Gastrocnemius medialis (tissue), 4 donors: ENCODE measurements at regions of chr15 and their contacts with region 1.

Region 1: GRCh38 chr15:68210821-68211655 is 5.9 kb upstream of the CALML4 start:
- DNase-seq: peak in 1 of 2 donors; percentile 48
- ATAC-seq: peak; percentile 35 to 70
- H3K4me3 ChIP-seq: peak overlapping the region in 1 of 4 donors; percentile 6
- H3K27ac ChIP-seq: no peak overlapping the region
- H3K4me1 ChIP-seq: peaks cover 4 to 5% of the 10 kb centered on the region in 2 donors
- H3K27me3 ChIP-seq: no peaks in the 10 kb centered on the region
- CTCF ChIP-seq: peak; percentile 75 to 94 (median 86)
- POLR2A ChIP-seq: no peak

Region 2: GRCh38 chr15:68154923-68155559 is 56.0 kb before region 1 on chr15:
- in situ Hi-C with region 1: no loop called
- intact Hi-C with region 1: no loop called
- DNase-seq: peak in 1 of 2 donors; percentile 21
- ATAC-seq: peak; percentile 49 to 60
- H3K4me3 ChIP-seq: no peak overlapping the region
- H3K27ac ChIP-seq: no peak overlapping the region
- H3K4me1 ChIP-seq: peaks cover 0 to 10% of the 10 kb centered on the region in 2 donors
- H3K27me3 ChIP-seq: no peaks in the 10 kb centered on the region
- CTCF ChIP-seq: peak; percentile 57 to 78 (median 68)
- POLR2A ChIP-seq: no peak

Region 3: DNA sequence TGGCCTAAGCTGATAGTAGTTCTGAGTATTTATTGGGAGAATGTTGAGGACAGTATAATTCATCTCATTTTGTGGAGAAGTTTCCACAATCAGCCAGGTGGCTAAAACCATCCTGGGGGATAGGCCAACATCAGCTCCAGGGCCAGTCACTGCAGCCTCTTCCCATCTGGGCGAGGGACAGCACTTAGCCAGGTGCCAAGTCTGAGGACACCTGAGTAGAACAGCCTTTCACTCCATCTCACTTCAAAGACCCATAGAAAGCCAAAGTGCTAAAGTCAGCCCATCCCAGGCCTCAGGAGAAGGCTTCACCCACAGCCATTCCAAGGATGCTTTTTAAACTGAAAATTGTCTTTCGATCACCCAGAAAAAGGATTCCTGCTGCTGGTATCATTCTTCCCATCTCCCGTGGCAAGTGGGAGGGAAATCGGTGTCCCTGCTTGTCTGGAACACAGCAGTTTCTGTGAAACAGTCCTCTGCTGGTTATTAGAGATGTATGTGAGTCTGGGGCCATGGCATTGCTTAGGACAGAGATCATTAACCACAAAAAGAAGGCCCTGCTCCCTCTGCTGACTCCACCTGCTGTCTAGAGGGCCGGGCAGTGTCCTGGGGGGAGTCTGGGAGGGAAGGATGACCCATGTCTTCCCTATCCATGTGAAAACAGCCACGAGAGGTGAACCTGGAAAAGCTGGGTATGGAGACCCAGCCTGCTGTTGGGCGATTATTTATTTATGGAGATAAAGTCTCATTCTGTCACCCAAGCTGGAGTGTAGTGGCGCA is 15.5 kb before region 1 on chr15:
- in situ Hi-C with region 1: no loop called
- intact Hi-C with region 1: loop called (anchors 1 kb)
- DNase-seq: no peak
- ATAC-seq: no peak
- H3K4me3 ChIP-seq: no peak overlapping the region
- H3K27ac ChIP-seq: peak overlapping the region in 2 of 4 donors; percentile 11 to 45
- H3K4me1 ChIP-seq: peaks cover 24 to 33% of the 10 kb centered on the region in 2 donors
- H3K27me3 ChIP-seq: no peaks in the 10 kb centered on the region
- CTCF ChIP-seq: no peak
- POLR2A ChIP-seq: no peak

Region 4: DNA sequence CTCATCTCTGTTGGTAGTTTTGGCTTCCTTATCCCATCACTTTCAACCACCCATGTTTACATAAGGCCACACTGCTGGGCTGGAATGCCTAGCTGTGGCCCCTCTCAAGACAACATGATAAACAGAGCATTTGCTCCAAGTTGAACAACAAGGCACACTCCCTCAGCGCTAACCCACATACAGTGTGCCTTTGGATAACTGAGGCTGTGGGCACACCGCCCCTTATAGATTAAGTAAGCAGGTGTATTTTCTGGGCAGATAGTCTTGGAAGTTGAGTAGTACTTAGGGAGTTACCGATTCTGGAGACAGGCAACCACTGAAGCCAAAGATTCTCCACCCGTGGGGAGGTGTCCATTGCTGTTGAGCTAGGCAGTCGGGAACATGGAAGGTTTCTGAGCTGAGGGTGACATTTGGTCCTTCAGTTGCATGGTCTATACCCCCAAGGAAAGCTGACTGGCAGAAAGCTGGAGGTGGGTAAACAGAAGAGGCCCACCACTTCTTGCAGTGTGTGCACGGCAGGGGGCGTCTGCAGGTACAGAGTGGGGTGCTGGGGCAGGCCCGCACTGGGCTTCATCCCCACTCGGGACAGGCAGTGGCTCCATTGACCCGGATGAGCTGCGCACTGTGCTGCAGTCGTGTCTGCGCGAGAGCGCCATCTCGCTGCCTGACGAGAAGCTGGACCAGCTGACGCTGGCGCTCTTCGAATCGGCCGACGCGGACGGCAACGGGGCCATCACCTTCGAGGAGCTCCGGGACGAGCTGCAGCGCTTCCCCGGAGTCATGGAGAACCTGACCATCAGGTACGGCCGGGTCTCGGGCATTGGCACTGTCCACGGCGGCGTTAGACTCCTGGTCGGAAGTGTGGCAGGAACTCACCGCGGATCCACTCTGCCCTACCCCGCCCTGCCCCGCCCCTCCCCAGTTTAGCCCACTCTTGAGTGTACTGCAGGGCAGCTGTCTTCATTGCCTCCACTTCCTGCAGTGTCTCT is 820.3 kb after region 1 on chr15:
- in situ Hi-C with region 1: no loop called
- intact Hi-C with region 1: no loop called
- DNase-seq: no peak
- ATAC-seq: no peak
- H3K4me3 ChIP-seq: peak overlapping the region; percentile 22 to 34 (median 28)
- H3K27ac ChIP-seq: no peak overlapping the region
- H3K4me1 ChIP-seq: no peaks in the 10 kb centered on the region
- H3K27me3 ChIP-seq: peaks cover 0 to 8% (median 4%) of the 10 kb centered on the region in 3 donors
- CTCF ChIP-seq: peak in 3 of 5 experiments; percentile 24 to 42 (median 42)
- POLR2A ChIP-seq: no peak

Region 5: GRCh38 chr15:69403594-69403993 is 1192.6 kb after region 1 on chr15:
- in situ Hi-C with region 1: no loop called
- intact Hi-C with region 1: no loop called
- DNase-seq: no peak
- ATAC-seq: peak; percentile 72 to 73
- H3K4me3 ChIP-seq: no peak overlapping the region
- H3K27ac ChIP-seq: no peak overlapping the region
- H3K4me1 ChIP-seq: no peaks in the 10 kb centered on the region
- H3K27me3 ChIP-seq: no peaks in the 10 kb centered on the region
- CTCF ChIP-seq: no peak
- POLR2A ChIP-seq: no peak